PC-3 (cell line): ENCODE measurements at regions of chr2 and their contacts with region 1.

Region 1: DNA sequence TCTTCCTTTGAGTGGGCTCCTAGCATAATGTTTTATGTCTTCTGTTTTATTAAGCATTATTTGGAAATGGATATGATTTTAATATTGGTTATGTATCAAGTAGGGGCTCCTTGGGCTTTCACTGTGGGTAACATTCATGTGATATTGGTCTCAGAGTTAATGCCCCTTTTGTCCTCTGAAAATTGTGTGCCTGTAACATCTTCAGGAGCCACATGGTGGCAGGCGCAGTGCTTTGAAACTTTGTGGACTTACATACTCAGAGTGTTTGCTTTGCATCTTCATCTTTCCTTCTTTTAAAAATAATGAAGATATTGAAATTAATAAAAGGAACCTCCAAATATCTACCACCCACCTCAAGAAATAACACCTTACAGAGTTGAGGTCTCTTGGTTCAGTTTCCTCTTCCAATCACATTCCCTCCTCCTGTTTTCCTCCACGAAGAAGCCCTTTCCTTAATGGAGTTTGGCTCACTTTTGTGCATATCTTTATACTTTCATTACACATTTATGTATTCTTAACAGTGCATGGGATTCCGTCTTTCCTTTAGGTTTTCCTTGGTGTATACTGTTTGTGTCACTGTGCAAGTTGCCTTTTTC is 73.5 kb downstream of the LIMS1 start:
- DNase-seq: peak; percentile 60
- ATAC-seq: peak; percentile 65
- H3K4me3 ChIP-seq: no peak overlapping the region
- H3K27ac ChIP-seq: no peak overlapping the region
- H3K4me1 ChIP-seq: peaks cover 14% of the 10 kb centered on the region
- H3K27me3 ChIP-seq: no peaks in the 10 kb centered on the region
- CTCF ChIP-seq: peak; percentile 80

Region 2: DNA sequence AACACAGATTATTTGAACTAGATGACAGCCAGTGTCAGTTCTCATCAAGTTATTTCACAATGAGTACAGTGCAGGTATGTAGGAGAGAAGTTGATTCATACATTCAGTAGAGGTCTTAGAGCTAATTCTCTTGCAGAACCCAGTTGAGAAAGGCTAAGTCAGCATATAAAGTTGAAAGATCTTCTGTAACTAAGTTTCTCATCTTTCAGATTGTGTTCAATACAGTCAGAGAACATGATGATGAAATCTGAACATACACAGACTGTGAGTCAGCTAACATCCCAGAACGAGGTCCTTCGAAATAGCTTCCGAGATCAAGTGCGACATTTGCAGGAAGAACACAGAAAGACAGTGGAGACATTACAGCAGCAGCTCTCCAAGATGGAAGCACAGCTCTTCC is 115.4 kb before region 1 on chr2:
- CTCF ChIA-PET with region 1: no interaction called
- POLR2A ChIA-PET with region 1: no interaction called
- intact Hi-C with region 1: no loop called
- DNase-seq: peak; percentile 37
- ATAC-seq: no peak
- H3K4me3 ChIP-seq: no peak overlapping the region
- H3K27ac ChIP-seq: no peak overlapping the region
- H3K4me1 ChIP-seq: no peaks in the 10 kb centered on the region
- H3K27me3 ChIP-seq: no peaks in the 10 kb centered on the region
- CTCF ChIP-seq: no peak

Region 3: DNA sequence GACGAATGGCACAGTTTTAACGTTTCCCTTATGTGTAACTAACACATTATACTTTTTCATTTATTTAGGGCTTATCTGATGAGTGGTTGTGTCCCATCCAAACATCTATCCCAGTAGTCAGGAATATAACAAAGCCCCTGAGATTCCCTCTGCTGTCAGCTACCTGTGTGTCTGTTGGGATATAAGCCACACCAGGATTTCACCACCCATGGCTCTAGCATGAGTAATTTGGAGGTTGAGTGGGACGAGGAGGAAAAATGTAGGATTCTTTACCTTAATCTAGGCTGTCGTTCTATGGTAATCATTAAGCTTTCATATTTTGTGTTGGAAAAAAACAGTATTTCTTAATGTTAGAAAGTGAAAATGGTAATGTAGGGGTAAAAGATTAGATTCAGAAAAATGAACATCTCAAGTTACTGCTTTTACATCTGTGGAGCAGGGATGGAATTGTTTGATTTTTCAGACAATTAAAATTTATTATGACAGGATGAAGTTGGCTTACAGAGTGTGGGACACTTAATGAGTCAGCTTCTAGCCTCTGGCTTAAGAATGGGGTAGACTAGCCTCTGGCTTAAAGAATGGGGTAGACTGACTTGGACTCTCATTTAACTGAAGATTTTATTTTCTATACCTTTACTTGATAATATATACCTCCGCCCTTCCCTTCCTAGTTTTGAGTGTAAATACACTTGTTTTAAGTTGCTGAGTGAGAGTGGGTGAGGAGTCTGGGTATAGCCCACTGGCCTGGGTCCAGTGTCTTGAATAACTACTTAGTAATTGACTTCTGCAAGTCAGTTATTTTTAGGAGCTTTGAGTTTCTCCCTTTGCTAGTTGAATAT is 23.0 kb after region 1 on chr2:
- CTCF ChIA-PET with region 1: interaction called, 12 read pairs
- POLR2A ChIA-PET with region 1: no interaction called
- intact Hi-C with region 1: loop called (anchors 1 kb)
- DNase-seq: peak; percentile 44
- ATAC-seq: peak; percentile 84
- H3K4me3 ChIP-seq: no peak overlapping the region
- H3K27ac ChIP-seq: no peak overlapping the region
- H3K4me1 ChIP-seq: peaks cover 12% of the 10 kb centered on the region
- H3K27me3 ChIP-seq: no peaks in the 10 kb centered on the region
- CTCF ChIP-seq: no peak

Region 4: DNA sequence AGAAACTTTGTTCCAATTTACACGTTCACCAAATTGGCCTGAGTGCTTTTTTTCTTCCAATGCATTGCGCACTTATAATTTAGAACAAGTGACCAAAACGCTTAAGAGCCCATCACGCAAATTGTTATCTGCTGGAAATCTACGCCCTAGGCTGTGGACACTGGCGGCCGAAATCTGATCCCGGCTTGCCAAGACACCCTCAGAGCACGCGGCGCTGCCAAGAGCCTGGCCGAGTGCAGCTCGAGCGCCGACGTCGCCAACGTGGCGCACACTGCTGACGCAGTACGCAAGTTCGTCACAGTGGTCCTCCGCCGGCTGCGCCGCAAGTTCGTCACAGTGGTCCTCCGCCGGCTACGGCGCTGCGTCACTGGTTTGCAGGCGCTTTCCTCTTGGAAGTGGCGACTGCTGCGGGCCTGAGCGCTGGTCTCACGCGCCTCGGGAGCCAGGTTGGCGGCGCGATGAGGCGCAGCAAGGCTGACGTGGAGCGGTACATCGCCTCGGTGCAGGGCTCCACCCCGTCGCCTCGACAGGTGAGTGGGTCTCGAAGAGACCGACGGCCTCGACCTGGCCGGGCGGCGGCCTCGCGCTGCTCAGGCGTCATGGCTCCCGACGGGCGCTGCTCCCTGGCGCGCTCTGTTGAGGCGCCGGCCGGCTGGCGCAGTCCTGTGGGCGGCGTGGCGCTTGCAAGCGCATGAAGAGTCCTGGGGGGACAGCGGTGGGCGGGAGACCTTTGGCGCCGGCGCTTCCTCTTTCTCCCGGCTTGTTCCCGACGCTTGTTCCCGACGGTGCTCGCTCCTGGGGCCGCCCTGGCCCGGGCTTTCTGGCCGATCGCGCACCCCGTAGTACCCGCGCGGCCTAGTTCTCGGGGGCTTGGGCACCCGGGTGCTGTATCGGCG is 111.6 kb after region 1 on chr2 and contains the start of gene RANBP2:
- CTCF ChIA-PET with region 1: no interaction called
- POLR2A ChIA-PET with region 1: no interaction called
- intact Hi-C with region 1: loop called (anchors 5 kb)
- DNase-seq: peak; percentile 98
- ATAC-seq: peak; percentile 97
- H3K4me3 ChIP-seq: peak within 1 kb of the TSS; percentile 82
- H3K27ac ChIP-seq: peak within 1 kb of the TSS; percentile 72
- H3K4me1 ChIP-seq: peaks cover 6% of the 10 kb centered on the region
- H3K27me3 ChIP-seq: no peaks in the 10 kb centered on the region
- CTCF ChIP-seq: no peak
- total RNA-seq, gene RANBP2: 39.9 and 42.2 TPM in 2 replicates